PC-3 (cell line): ENCODE measurements at regions of chr4 and their contacts with region 1.

Region 1: GRCh38 chr4:174631901-174632758 is 109.8 kb upstream of the HPGD start:
- DNase-seq: peak; percentile 50
- ATAC-seq: peak; percentile 39
- H3K4me3 ChIP-seq: no peak overlapping the region
- H3K27ac ChIP-seq: 0 out of 2 replicates have a peak overlapping the region, but pooled peaks have one; percentile 12
- H3K4me1 ChIP-seq: peaks cover 45% of the 10 kb centered on the region
- H3K27me3 ChIP-seq: no peaks in the 10 kb centered on the region
- CTCF ChIP-seq: peak; percentile 88

Region 2: GRCh38 chr4:174553828-174554227 is 78.3 kb before region 1 on chr4:
- CTCF ChIA-PET with region 1: no interaction called
- POLR2A ChIA-PET with region 1: no interaction called
- intact Hi-C with region 1: loop called (anchors 5 kb)
- DNase-seq: peak; percentile 83
- ATAC-seq: peak; percentile 86
- H3K4me3 ChIP-seq: no peak overlapping the region
- H3K27ac ChIP-seq: peak overlapping the region; percentile 86
- H3K4me1 ChIP-seq: peaks cover 24% of the 10 kb centered on the region
- H3K27me3 ChIP-seq: no peaks in the 10 kb centered on the region
- CTCF ChIP-seq: no peak

Region 3: GRCh38 chr4:174714393-174715211 is 82.5 kb after region 1 on chr4:
- CTCF ChIA-PET with region 1: no interaction called
- POLR2A ChIA-PET with region 1: no interaction called
- intact Hi-C with region 1: loop called (anchors 5 kb)
- DNase-seq: peak; percentile 68
- ATAC-seq: peak; percentile 60; the same call in 1 of the 2 replicates
- H3K4me3 ChIP-seq: no peak overlapping the region
- H3K27ac ChIP-seq: no peak overlapping the region
- H3K4me1 ChIP-seq: peaks cover 16% of the 10 kb centered on the region
- H3K27me3 ChIP-seq: no peaks in the 10 kb centered on the region
- CTCF ChIP-seq: peak; percentile 79

Region 4: GRCh38 chr4:174870761-174871160 is 238.6 kb after region 1 on chr4:
- CTCF ChIA-PET with region 1: no interaction called
- POLR2A ChIA-PET with region 1: no interaction called
- intact Hi-C with region 1: no loop called
- DNase-seq: peak; percentile 71
- ATAC-seq: no peak
- H3K4me3 ChIP-seq: no peak overlapping the region
- H3K27ac ChIP-seq: peak overlapping the region; percentile 23; the same call in 1 of the 2 replicates
- H3K4me1 ChIP-seq: peaks cover 20% of the 10 kb centered on the region
- H3K27me3 ChIP-seq: no peaks in the 10 kb centered on the region
- CTCF ChIP-seq: no peak